ENCODE measurements at regions of chr2 and their contacts with region 1.

Region 1: GRCh38 chr2:219689676-219690628 is 62.5 kb downstream of the SLC4A3 start:
- DNase-seq: peak; percentile 79
- ATAC-seq: peak; percentile 6; the same call in 1 of the 2 replicates
- H3K4me3 ChIP-seq: no peak overlapping the region
- H3K27ac ChIP-seq: peak overlapping the region; percentile 98
- H3K4me1 ChIP-seq: peaks cover 54% of the 10 kb centered on the region
- H3K27me3 ChIP-seq: no peaks in the 10 kb centered on the region
- CTCF ChIP-seq: peak; percentile 67

Region 2: DNA sequence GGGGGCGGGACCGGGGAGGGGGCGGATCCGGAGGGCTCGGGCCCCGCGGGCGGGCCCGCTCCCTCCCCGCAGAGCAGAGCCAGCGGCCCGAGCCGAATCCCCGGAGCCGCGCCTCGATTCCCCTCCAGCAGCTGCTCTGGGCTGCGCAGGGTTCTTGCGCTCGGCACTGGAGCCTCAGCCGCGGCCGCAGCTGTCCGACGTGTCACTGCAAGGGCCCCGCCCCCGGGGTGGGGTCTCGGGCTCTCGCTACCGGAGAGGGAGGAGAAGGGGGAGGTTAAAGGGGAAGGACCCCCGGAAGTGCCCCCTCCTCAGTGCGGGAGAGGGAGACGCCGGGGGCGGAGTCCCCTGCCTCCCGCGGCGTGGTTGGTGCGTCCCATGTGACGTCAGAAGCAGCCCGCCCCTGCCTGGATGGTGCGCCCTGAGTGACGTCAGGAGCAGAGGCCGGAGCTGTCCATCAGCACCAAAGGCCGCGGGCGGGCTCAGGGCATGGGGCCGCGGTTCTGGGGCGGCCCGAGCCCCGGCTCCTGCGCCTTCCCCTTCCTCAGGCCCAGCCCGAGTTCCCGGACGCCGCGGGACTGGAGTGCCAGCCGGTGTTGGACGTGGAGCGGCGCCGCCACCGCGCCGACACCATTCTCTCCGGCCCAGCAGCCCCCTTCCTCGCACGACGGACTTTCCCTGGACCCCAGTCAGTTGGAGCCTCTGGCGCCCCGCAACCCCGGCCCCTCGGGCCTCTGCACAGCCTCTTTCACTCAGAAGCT is 146.2 kb before region 1 on chr2 and contains the starts of genes CHPF and TMEM198:
- CTCF ChIA-PET with region 1: interaction called, 5 read pairs
- POLR2A ChIA-PET with region 1: no interaction called
- intact Hi-C with region 1: loop called (anchors 1 kb)
- DNase-seq: peak; percentile 98
- ATAC-seq: peak; percentile 78
- H3K4me3 ChIP-seq: peak within 1 kb of the TSS; percentile 91
- H3K27ac ChIP-seq: peak within 1 kb of the TSS; percentile 56
- H3K4me1 ChIP-seq: peaks cover 7% of the 10 kb centered on the region; the same call in 1 of the 2 replicates
- H3K27me3 ChIP-seq: no peaks in the 10 kb centered on the region
- CTCF ChIP-seq: no peak
- total RNA-seq, gene CHPF: 139 and 210 TPM in 2 replicates
- total RNA-seq, gene TMEM198: 1.1 and 5.2 TPM in 2 replicates

Region 3: DNA sequence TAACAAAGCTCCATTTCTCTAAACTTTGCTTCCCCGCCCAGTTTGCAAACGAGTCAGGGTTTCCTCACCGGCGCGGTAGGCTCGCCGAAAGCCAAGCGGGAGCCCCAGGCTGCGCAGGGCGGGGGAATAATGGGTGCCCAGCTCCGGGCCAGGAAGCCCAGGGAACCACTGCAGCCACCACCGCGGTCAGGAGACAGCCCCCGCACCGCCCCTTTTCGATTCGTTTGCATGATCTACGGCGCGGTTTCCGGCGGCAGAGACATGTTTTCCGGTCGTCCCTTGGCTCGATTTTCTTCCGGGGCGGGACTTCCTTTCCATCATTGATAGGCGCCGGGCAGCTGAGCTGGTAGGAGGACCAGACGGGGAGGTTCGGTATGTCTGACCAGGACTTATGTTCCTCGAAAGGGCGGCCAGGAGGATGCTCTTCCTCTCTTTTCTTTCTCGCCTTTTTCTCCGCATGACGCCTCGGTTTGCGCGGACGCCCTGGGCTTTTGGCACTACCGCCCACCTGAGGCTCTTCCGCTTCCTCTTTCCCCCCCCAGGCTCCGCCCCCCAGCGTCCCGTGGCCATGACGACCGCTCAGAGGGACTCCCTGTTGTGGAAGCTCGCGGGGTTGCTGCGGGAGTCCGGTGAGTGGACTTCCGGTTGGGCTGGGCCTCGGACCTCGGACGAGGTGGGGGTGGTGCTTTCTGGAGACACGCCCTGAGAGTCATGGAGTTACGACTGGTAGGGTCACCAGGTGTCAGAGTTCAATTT is 92.2 kb before region 1 on chr2 and contains the start of gene STK11IP:
- CTCF ChIA-PET with region 1: interaction called, 5 read pairs
- POLR2A ChIA-PET with region 1: interaction called, 7 read pairs
- intact Hi-C with region 1: loop called (anchors 1 kb)
- DNase-seq: peak; percentile 96
- ATAC-seq: peak; percentile 94
- H3K4me3 ChIP-seq: peak within 1 kb of the TSS; percentile 82
- H3K27ac ChIP-seq: peak within 1 kb of the TSS; percentile 75
- H3K4me1 ChIP-seq: peaks cover 15% of the 10 kb centered on the region
- H3K27me3 ChIP-seq: no peaks in the 10 kb centered on the region
- CTCF ChIP-seq: no peak
- total RNA-seq, gene STK11IP: 17.7 and 26.4 TPM in 2 replicates

Region 4: DNA sequence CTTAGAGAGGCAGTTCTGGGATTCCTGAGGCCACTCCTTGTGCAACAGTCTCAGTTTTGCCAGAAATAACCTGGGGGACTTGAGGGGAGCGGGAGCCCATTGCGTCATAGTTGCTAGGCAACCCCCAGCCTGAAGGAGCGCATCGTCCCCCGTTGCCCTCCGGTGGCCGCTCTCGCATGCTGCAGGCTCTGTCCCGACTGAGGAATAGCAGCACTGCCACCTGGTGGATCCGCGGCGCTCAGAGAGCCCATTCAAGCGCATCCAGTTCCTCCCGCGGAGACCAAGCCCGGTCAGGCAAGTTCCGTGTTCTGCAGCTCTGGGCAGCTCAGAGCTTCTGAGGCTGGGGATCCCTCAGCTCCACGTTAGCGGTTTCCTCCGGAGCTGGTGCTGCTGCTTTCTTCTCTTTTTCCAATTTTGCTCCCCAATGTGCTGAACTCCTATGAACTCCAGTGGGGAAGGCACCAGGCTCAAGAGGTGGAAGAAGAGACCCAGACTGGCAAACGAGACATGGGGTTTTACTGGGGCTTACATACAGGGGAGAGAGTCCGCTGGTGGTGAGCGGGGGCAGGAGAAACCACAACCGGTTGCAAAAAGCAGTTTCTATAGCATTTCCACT is 47.4 kb before region 1 on chr2:
- CTCF ChIA-PET with region 1: interaction called, 14 read pairs
- POLR2A ChIA-PET with region 1: interaction called, 4 read pairs
- intact Hi-C with region 1: loop called (anchors 1 kb)
- DNase-seq: peak; percentile 97
- ATAC-seq: peak; percentile 75
- H3K4me3 ChIP-seq: no peak overlapping the region
- H3K27ac ChIP-seq: no peak overlapping the region
- H3K4me1 ChIP-seq: peaks cover 27% of the 10 kb centered on the region
- H3K27me3 ChIP-seq: no peaks in the 10 kb centered on the region
- CTCF ChIP-seq: peak; percentile 97

Region 5: DNA sequence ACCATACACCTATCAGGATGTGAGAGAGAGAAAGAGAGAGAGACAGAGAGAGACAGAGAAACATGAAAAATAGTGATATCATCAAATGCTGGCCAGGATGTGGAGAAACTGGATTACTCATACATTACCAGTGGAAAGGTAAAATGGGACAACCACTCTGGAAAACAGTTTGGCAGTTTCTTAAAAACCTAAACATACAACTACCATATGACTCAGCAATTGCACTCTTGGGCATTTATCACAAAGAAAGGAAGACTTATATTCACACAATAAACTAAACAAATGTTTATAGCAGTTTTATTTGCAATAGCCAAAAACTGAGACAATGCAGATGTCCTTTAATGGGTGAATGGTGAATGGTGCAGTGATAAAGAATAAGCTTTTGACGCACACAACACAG is 33.4 kb before region 1 on chr2:
- CTCF ChIA-PET with region 1: no interaction called
- POLR2A ChIA-PET with region 1: interaction called, 3 read pairs
- intact Hi-C with region 1: loop called (anchors 1 kb)
- DNase-seq: peak; percentile 93
- ATAC-seq: peak; percentile 87
- H3K4me3 ChIP-seq: no peak overlapping the region
- H3K27ac ChIP-seq: peak overlapping the region; percentile 93
- H3K4me1 ChIP-seq: peaks cover 32% of the 10 kb centered on the region
- H3K27me3 ChIP-seq: no peaks in the 10 kb centered on the region
- CTCF ChIP-seq: no peak

Measured in PC-3 (cell line).